CD4-positive, alpha-beta T cell (primary cell): ENCODE measurements at regions of chr13 and their contacts with region 1.

Region 1: DNA sequence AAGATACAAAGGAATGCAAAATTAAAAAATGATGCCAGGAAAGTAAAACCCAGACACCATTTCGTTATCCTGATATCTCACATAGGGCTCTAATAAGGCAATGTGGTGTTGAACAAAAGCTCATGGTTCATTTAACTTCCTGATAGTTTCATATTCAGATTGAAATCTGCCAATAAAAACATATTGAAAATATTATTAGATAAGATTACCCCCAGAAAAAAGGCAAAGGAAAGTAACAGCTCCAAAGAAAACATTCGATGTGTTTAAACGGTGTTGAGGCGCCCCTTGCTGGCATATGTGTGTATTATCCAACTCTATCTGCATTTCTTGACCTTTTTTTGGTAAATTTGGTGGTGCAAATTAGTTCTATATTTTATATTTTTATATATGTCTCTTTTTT is 75.9 kb downstream of the ESD start:
- DNase-seq: peak; percentile 12 to 69 (median 30)
- ATAC-seq: peak; percentile 64
- H3K4me3 ChIP-seq: no peak overlapping the region
- H3K4me3 Mint-ChIP-seq: no peak overlapping the region
- H3K27ac ChIP-seq: no peak overlapping the region
- H3K27ac Mint-ChIP-seq: no peak overlapping the region
- H3K4me1 ChIP-seq: no peaks in the 10 kb centered on the region
- H3K4me1 Mint-ChIP-seq: no peaks in the 10 kb centered on the region
- H3K27me3 ChIP-seq: no peaks in the 10 kb centered on the region
- H3K27me3 Mint-ChIP-seq: no peaks in the 10 kb centered on the region
- CTCF ChIP-seq: peak; percentile 71

Region 2: DNA sequence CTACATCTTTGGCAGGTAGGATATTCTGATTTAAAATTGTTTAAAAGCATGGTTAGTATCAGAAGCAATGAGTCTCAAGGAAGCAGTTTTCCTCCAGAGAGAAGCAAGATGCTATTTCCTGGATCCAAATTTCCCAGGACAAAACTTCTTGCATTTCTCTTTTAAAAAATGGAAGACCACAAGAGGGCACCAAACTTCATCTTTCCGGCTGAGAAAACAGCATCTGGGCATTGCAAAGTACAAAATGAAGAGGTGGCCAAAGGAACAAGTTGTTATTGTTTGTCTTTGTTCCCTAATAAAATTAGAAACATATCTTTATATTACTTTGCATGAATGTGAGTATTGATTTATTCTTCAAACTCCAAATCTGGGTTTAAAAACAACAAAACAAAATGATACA is 228.1 kb before region 1 on chr13:
- CTCF ChIA-PET with region 1: interaction called, 5 read pairs
- POLR2A ChIA-PET with region 1: no interaction called
- intact Hi-C with region 1: loop called (anchors 1 kb)
- DNase-seq: peak in 3 of 14 experiments; percentile 38 to 56 (median 54)
- ATAC-seq: no peak
- H3K4me3 ChIP-seq: no peak overlapping the region
- H3K4me3 Mint-ChIP-seq: no peak overlapping the region
- H3K27ac ChIP-seq: no peak overlapping the region
- H3K27ac Mint-ChIP-seq: no peak overlapping the region
- H3K4me1 ChIP-seq: no peaks in the 10 kb centered on the region
- H3K4me1 Mint-ChIP-seq: no peaks in the 10 kb centered on the region
- H3K27me3 ChIP-seq: peaks cover 0 to 3% of the 10 kb centered on the region in 2 experiments
- H3K27me3 Mint-ChIP-seq: peaks cover 5% of the 10 kb centered on the region
- CTCF ChIP-seq: peak; percentile 75